ENCODE measurements at regions of chr6 and their contacts with region 1.

Region 1: DNA sequence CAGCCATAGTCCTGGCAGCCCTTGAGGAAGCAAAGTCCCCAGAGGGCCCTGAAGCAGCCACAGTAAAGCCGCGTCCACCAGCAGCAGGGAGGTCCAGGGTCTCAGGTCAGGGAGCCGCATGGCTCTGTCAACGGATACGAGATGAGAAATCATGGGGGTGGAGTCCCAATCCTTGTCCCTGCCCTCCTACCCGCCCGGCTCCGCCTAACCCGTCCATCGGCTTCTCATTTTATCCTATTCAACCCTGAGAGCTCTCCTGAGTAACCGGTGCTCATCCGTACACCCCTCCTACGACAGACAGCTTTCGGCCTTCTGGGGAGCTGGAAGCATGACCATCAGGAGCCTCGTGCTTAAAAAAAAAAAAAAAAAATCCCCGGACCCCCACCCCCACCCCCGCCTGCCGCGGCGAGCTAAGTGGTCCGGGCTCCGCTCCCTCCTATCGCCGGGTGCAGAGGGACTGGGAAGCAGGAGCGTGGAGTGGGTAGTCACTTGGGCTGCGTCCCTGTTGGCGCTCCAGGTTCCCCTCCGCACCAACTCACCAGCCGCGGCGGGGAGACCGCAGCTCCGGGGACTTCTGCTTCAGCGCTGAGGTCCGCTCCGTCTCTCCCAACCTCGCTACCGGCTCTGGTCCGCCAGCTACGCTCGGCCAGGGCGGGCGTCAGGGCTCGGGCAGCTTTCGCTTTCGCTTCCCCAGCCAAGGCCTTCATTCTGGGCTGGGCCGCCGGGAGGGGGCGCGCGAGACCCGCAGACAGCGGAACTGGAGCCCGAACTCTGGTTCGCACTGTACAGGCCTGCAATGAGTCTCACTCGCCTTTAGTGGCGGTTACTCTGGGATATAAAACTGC is at the start of gene TAP2:
- DNase-seq: peak; percentile 90 to 99 (median 96)

Region 2: GRCh38 chr6:32853541-32854375 is 15.4 kb after region 1 on chr6 and contains the starts of genes PSMB9 and TAP1:
- intact Hi-C with region 1: loop called (anchors 1 kb)
- DNase-seq: peak; percentile 84 to 99 (median 90)

Region 3: DNA sequence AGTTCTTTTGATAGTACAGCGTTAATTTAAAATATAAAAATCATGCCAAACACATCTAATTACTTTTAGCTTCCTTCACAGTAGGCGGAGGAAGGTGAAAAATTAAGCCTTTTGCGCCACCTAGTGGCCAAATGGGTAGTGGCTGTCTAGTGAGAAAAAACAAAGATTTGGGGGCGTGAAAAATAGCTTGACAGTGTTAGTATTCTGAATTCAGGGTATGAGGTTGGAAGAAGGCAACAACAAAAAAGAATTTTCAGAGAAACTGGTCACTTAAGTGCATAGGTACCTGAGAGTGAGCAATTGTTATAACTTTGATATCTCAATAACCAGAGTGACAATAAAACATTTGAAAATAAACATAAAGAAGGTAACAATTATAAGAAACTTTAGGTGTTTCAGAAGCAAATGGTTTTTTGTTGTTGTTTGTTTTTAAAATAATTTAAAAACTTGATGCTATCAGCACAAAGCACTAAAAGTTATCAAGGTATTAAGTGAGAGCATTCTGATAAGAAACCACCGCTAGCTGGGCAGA is 30.0 kb after region 1 on chr6:
- intact Hi-C with region 1: loop called (anchors 1 kb)
- DNase-seq: peak in 9 of 10 donors; percentile 34 to 94 (median 81)

Region 4: GRCh38 chr6:33036535-33036934 is 198.2 kb after region 1 on chr6:
- intact Hi-C with region 1: no loop called
- DNase-seq: no peak

Measured in posterior cingulate gyrus (tissue), 11 donors.